Panc1 (cell line): ENCODE measurements at regions of chr16 and their contacts with region 1.

Region 1: GRCh38 chr16:51762081-51762996 is 611.3 kb upstream of the SALL1 start:
- DNase-seq: peak; percentile 25
- ATAC-seq: peak; percentile 95
- H3K4me3 ChIP-seq: 0 out of 4 replicates have a peak overlapping the region, but pooled peaks of 1 of the 2 experiments have one; percentile 0
- H3K27ac ChIP-seq: no peak overlapping the region
- H3K4me1 ChIP-seq: no peaks in the 10 kb centered on the region
- H3K27me3 ChIP-seq: no peaks in the 10 kb centered on the region
- CTCF ChIP-seq: peak; percentile 89

Region 2: DNA sequence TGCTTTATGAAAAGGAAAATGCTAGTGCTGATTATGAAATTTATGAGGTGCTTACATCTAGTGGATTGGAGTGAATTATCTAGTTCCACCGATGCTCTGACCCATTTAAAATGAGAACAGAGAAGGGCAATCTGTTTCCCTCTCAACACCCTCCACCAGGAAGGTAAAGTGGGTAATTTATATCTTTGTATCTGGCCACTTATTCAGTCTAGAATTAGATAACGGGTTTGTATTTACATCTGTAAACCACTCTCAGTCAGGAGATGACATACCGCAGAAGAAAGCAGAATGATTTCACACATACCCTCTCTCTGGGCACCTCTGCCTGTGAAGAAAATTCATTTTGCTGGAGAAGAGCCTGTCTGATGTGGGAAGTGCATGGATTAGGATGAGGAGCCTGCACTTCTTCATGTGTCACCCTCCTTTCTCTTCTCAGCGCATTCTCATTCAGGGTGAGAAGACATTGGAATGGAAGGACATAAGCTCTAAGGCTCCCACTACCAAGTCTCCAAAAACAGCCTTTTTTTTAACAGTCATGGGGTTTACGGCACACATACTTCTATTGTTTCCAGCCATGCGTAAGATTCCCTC is 35.4 kb after region 1 on chr16:
- CTCF ChIA-PET with region 1: interaction called, 10 read pairs
- POLR2A ChIA-PET with region 1: no interaction called
- in situ Hi-C with region 1: no loop called
- intact Hi-C with region 1: no loop called
- DNase-seq: no peak
- ATAC-seq: no peak
- H3K4me3 ChIP-seq: no peak overlapping the region
- H3K27ac ChIP-seq: no peak overlapping the region
- H3K4me1 ChIP-seq: no peaks in the 10 kb centered on the region
- H3K27me3 ChIP-seq: no peaks in the 10 kb centered on the region
- CTCF ChIP-seq: no peak

Region 3: GRCh38 chr16:51919736-51920135 is 157.4 kb after region 1 on chr16:
- CTCF ChIA-PET with region 1: no interaction called
- POLR2A ChIA-PET with region 1: no interaction called
- in situ Hi-C with region 1: no loop called
- intact Hi-C with region 1: no loop called
- DNase-seq: no peak
- ATAC-seq: no peak
- H3K4me3 ChIP-seq: no peak overlapping the region
- H3K27ac ChIP-seq: no peak overlapping the region
- H3K4me1 ChIP-seq: no peaks in the 10 kb centered on the region
- H3K27me3 ChIP-seq: no peaks in the 10 kb centered on the region
- CTCF ChIP-seq: no peak